WTC11 (cell line): ENCODE measurements at regions of chr19 and their contacts with region 1.

Region 1: GRCh38 chr19:48391107-48391986 is at the start of gene KDELR1:
- DNase-seq: peak; percentile 79
- ATAC-seq: peak; percentile 73
- H3K4me3 Mint-ChIP-seq: peak within 1 kb of the TSS; percentile 91
- H3K27ac Mint-ChIP-seq: peak within 1 kb of the TSS; percentile 60; the same call in 1 of the 2 replicates
- H3K4me1 Mint-ChIP-seq: peaks cover 31% of the 10 kb centered on the region
- H3K27me3 Mint-ChIP-seq: peaks cover 42% of the 10 kb centered on the region
- CTCF ChIP-seq: peak; percentile 79
- total RNA-seq, gene KDELR1: 207 to 226 TPM (median 223 TPM) in 3 replicates

Region 2: DNA sequence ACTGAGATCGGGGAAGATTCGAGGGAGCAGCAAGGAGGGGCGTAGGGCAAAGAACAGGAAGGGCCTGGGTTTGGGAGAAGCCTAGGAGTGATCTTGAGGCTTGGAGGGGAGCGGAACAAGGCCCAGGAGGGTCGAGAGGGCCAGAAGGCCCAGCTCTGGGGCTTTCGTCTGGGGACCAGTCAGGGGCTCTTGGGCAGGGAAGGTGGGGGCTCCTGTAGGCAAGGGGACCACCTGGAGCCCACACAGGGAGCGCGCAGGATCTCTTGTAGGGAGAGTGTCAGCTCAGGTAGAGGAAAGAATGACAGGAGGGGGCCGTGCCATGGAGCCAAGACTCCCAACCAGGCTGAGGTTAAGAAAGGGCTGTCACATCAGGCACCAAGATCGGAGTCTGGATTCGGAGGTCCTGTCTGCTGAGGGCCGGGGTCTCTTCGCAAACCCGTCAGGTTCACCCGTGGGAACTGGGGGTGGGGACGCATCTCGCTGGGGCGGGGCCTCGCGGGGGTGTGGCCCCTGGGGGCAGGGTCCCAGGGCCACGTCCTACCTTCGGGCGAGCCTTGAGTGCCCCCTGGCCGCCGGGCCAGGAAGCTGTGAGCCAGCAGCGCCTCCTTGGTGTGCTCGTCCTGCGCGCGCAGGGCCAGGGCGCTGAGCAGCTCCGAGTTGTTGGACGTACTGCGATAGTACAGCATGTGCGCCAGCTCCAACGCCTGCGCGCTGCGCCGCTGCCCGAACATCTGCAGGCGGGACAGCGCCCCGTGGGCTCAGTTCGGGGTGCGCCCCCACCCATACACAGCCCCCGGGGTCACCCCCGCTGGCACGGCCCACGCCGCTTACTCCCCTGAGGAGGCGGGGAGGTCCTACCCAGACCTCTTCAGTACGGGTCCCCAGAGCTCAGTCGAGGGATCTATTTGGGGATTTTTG is 57.6 kb before region 1 on chr19:
- CTCF ChIA-PET with region 1: interaction called, 43 read pairs
- POLR2A ChIA-PET with region 1: interaction called, 3 read pairs
- DNase-seq: peak; percentile 92
- ATAC-seq: peak; percentile 74
- H3K4me3 Mint-ChIP-seq: peak overlapping the region; percentile 84
- H3K27ac Mint-ChIP-seq: peak overlapping the region; percentile 97
- H3K4me1 Mint-ChIP-seq: peaks cover 30% of the 10 kb centered on the region
- H3K27me3 Mint-ChIP-seq: peaks cover 10% of the 10 kb centered on the region
- CTCF ChIP-seq: peak; percentile 29; the same call in 1 of the 2 replicates

Region 3: GRCh38 chr19:48372904-48373303 is 18.4 kb before region 1 on chr19:
- CTCF ChIA-PET with region 1: interaction called, 28 read pairs
- POLR2A ChIA-PET with region 1: no interaction called
- DNase-seq: no peak
- ATAC-seq: no peak
- H3K4me3 Mint-ChIP-seq: no peak overlapping the region
- H3K27ac Mint-ChIP-seq: no peak overlapping the region
- H3K4me1 Mint-ChIP-seq: 0 out of 2 replicates have a peak, but pooled peaks cover 4% of the 10 kb centered on the region
- H3K27me3 Mint-ChIP-seq: peaks cover 22% of the 10 kb centered on the region
- CTCF ChIP-seq: no peak

Region 4: GRCh38 chr19:48424694-48425219 is 33.4 kb after region 1 on chr19:
- CTCF ChIA-PET with region 1: interaction called, 70 read pairs
- POLR2A ChIA-PET with region 1: no interaction called
- DNase-seq: no peak
- ATAC-seq: peak; percentile 34; the same call in 1 of the 2 replicates
- H3K4me3 Mint-ChIP-seq: no peak overlapping the region
- H3K27ac Mint-ChIP-seq: peak overlapping the region; percentile 98
- H3K4me1 Mint-ChIP-seq: peaks cover 6% of the 10 kb centered on the region
- H3K27me3 Mint-ChIP-seq: no peaks in the 10 kb centered on the region
- CTCF ChIP-seq: no peak

Region 5: DNA sequence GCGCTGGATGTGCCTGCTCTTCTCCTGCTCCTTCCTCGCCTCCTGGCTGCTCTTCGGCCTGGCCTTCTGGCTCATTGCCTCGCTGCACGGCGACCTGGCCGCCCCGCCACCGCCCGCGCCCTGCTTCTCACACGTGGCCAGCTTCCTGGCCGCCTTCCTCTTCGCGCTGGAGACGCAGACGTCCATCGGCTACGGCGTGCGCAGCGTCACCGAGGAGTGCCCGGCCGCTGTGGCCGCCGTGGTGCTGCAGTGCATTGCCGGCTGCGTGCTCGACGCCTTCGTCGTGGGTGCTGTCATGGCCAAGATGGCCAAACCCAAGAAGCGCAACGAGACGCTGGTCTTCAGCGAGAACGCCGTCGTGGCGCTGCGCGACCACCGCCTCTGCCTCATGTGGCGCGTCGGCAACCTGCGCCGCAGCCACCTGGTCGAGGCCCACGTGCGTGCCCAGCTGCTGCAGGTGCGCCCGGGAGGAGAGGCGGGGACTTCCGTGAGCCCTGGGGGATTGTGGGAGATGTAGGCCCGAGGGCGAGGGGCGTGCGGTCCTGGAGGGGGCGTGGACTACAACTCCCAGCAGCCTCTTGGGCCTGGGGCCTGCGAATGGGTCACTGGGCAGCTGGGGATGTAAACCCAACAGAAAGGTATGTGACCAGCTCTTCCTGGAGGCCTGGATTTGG is 70.8 kb after region 1 on chr19:
- CTCF ChIA-PET with region 1: interaction called, 17 read pairs
- POLR2A ChIA-PET with region 1: no interaction called
- DNase-seq: peak; percentile 91
- ATAC-seq: peak; percentile 97
- H3K4me3 Mint-ChIP-seq: no peak overlapping the region
- H3K27ac Mint-ChIP-seq: no peak overlapping the region
- H3K4me1 Mint-ChIP-seq: 0 out of 2 replicates have a peak, but pooled peaks cover 2% of the 10 kb centered on the region
- H3K27me3 Mint-ChIP-seq: peaks cover 27% of the 10 kb centered on the region
- CTCF ChIP-seq: no peak